ENCODE measurements at regions of chr4 and their contacts with region 1.

Region 1: GRCh38 chr4:81635739-81636138 is 164.0 kb upstream of the RASGEF1B start:
- DNase-seq: peak; percentile 71
- H3K4me3 Mint-ChIP-seq: peak overlapping the region; percentile 46
- H3K27ac Mint-ChIP-seq: peak overlapping the region; percentile 94
- H3K4me1 Mint-ChIP-seq: peaks cover 37% of the 10 kb centered on the region
- H3K27me3 Mint-ChIP-seq: no peaks in the 10 kb centered on the region
- CTCF ChIP-seq: no peak

Region 2: GRCh38 chr4:81459228-81459627 is 176.5 kb before region 1 on chr4:
- CTCF ChIA-PET with region 1: no interaction called
- intact Hi-C with region 1: no loop called
- DNase-seq: no peak
- H3K4me3 Mint-ChIP-seq: no peak overlapping the region
- H3K27ac Mint-ChIP-seq: no peak overlapping the region
- H3K4me1 Mint-ChIP-seq: peaks cover 16% of the 10 kb centered on the region
- H3K27me3 Mint-ChIP-seq: no peaks in the 10 kb centered on the region
- CTCF ChIP-seq: no peak

Region 3: GRCh38 chr4:81494031-81494431 is 141.7 kb before region 1 on chr4:
- CTCF ChIA-PET with region 1: no interaction called
- intact Hi-C with region 1: loop called (anchors 5 kb)
- DNase-seq: no peak
- H3K4me3 Mint-ChIP-seq: peak overlapping the region; percentile 41
- H3K27ac Mint-ChIP-seq: peak overlapping the region; percentile 91
- H3K4me1 Mint-ChIP-seq: peaks cover 27% of the 10 kb centered on the region
- H3K27me3 Mint-ChIP-seq: no peaks in the 10 kb centered on the region
- CTCF ChIP-seq: no peak

Region 4: GRCh38 chr4:81844717-81845116 is 209.0 kb after region 1 on chr4:
- CTCF ChIA-PET with region 1: no interaction called
- intact Hi-C with region 1: loop called (anchors 1 kb)
- DNase-seq: peak; percentile 71
- H3K4me3 Mint-ChIP-seq: no peak overlapping the region
- H3K27ac Mint-ChIP-seq: peak overlapping the region; percentile 66
- H3K4me1 Mint-ChIP-seq: peaks cover 55% of the 10 kb centered on the region
- H3K27me3 Mint-ChIP-seq: no peaks in the 10 kb centered on the region
- CTCF ChIP-seq: peak; percentile 52

Measured in Calu3 (cell line).